ENCODE measurements at regions of chr1 and their contacts with region 1.

Region 1: GRCh38 chr1:26138974-26139558 is 19.8 kb upstream of the FAM110D start:
- DNase-seq: peak in 2 of 9 experiments; percentile 36 to 44
- ATAC-seq: peak; percentile 64
- H3K4me3 ChIP-seq: no peak overlapping the region
- H3K4me3 Mint-ChIP-seq: peak overlapping the region; percentile 26
- H3K27ac ChIP-seq: no peak overlapping the region
- H3K27ac Mint-ChIP-seq: peak overlapping the region; percentile 46
- H3K4me1 ChIP-seq: peaks cover 13% of the 10 kb centered on the region
- H3K4me1 Mint-ChIP-seq: peaks cover 13% of the 10 kb centered on the region
- H3K27me3 ChIP-seq: no peaks in the 10 kb centered on the region
- H3K27me3 Mint-ChIP-seq: no peaks in the 10 kb centered on the region
- CTCF ChIP-seq: no peak

Region 2: GRCh38 chr1:26126321-26127084 is 12.6 kb before region 1 on chr1:
- CTCF ChIA-PET with region 1: interaction called, 110 read pairs
- POLR2A ChIA-PET with region 1: interaction called, 19 read pairs
- intact Hi-C with region 1: loop called in 1 of 2 experiments (anchors 2 kb)
- DNase-seq: peak; percentile 18 to 94 (median 58)
- ATAC-seq: peak; percentile 98
- H3K4me3 ChIP-seq: peak overlapping the region in 1 of 2 experiments; percentile 12
- H3K4me3 Mint-ChIP-seq: peak overlapping the region; percentile 54
- H3K27ac ChIP-seq: peak overlapping the region; percentile 16 to 21
- H3K27ac Mint-ChIP-seq: peak overlapping the region; percentile 88
- H3K4me1 ChIP-seq: peaks cover 26% of the 10 kb centered on the region
- H3K4me1 Mint-ChIP-seq: peaks cover 40% of the 10 kb centered on the region
- H3K27me3 ChIP-seq: peaks cover 0 to 7% of the 10 kb centered on the region in 2 experiments
- H3K27me3 Mint-ChIP-seq: no peaks in the 10 kb centered on the region
- CTCF ChIP-seq: no peak